PC-9 (cell line): ENCODE measurements at regions of chr4 and their contacts with region 1.

Region 1: GRCh38 chr4:3276986-3277385 is 15.8 kb upstream of the RGS12 start:
- DNase-seq: no peak
- H3K4me3 ChIP-seq: no peak overlapping the region
- H3K27ac ChIP-seq: no peak overlapping the region
- H3K4me1 ChIP-seq: no peaks in the 10 kb centered on the region
- H3K27me3 ChIP-seq: no peaks in the 10 kb centered on the region
- CTCF ChIP-seq: no peak

Region 2: DNA sequence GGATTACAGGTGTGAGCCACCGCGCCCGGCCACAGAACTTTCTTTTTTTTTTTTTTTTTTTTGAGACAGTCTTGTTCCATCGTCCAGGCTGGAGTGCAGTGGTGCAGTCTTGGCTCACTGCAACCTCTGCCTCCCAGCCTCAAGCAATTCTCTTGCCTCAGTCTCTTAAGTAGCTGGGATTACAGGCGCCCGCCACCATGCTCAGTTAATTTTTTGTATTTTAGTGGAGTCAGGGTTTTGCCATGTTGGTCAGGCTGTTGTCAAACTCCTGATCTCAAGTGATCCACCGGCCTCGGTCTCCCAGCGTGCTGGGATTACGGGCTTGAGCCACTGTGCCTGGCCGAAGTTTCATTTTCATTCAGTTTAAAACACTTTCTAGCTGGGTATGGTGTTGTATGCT is 724.2 kb before region 1 on chr4:
- CTCF ChIA-PET with region 1: no interaction called
- POLR2A ChIA-PET with region 1: no interaction called
- intact Hi-C with region 1: no loop called
- DNase-seq: no peak
- H3K4me3 ChIP-seq: no peak overlapping the region
- H3K27ac ChIP-seq: no peak overlapping the region
- H3K4me1 ChIP-seq: no peaks in the 10 kb centered on the region
- H3K27me3 ChIP-seq: no peaks in the 10 kb centered on the region
- CTCF ChIP-seq: no peak

Region 3: GRCh38 chr4:2712261-2712842 is 564.6 kb before region 1 on chr4:
- CTCF ChIA-PET with region 1: interaction called, 13 read pairs
- POLR2A ChIA-PET with region 1: no interaction called
- intact Hi-C with region 1: no loop called
- DNase-seq: no peak
- H3K4me3 ChIP-seq: no peak overlapping the region
- H3K27ac ChIP-seq: no peak overlapping the region
- H3K4me1 ChIP-seq: no peaks in the 10 kb centered on the region
- H3K27me3 ChIP-seq: no peaks in the 10 kb centered on the region
- CTCF ChIP-seq: peak; percentile 35; the same call in 1 of the 2 replicates